Left colon (tissue), 2 donors: ENCODE measurements at regions of chr2 and their contacts with region 1.

Region 1: DNA sequence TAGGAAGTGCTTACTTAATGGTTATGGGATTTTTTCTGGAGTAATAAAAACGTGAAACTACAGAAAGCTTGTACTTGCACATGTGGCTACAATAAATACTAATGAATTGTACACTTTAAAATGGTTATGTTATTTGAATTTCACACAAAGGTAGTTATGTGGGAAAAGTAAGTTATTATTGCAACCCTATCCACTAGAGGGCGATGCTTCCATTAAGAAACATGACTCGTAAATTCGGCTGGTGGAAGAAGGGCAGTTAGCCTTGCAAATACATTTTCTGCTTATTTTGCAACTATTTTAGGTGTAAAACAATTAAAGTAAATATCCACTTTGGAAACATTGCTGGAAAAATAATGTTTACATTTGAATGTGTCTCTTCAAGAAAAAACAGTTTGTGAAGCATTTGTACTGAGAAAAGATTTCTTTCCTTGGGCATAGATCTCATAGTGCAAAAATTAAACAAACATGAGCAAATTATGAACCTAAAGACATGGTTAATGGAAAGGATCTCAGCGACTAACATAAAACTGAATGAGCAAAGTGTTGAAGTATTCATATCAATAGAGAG is 68.1 kb upstream of the CSRNP3 start:
- DNase-seq: no peak
- ATAC-seq: peak; percentile 55

Region 2: GRCh38 chr2:165587335-165587938 is 186.1 kb after region 1 on chr2:
- intact Hi-C with region 1: no loop called
- DNase-seq: no peak
- ATAC-seq: peak; percentile 96

Region 3: DNA sequence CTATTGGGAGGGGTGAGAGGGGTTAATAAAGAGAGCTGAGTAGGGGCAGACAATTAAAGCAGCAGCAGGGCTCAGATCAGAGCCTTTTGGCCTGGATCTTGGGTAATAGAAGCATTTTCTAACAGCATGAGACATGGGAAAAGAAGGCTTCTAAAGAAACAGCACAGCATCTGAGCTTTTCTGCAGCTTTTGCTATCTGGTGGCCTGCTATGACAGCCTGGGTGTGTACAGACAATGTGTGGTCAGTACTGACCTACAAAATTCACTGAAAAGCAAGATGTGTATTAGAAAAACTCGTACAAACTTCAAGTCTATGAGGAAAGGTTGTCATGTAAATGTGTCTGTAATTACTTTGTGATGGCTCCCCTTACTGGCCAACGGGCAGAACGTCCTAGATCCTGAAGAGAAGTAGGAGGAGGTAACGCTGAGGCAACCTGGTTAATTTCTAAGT is 297.1 kb after region 1 on chr2:
- intact Hi-C with region 1: loop called (anchors 5 to 10 kb)
- DNase-seq: peak in 1 of 2 donors; percentile 25
- ATAC-seq: peak; percentile 86

Region 4: DNA sequence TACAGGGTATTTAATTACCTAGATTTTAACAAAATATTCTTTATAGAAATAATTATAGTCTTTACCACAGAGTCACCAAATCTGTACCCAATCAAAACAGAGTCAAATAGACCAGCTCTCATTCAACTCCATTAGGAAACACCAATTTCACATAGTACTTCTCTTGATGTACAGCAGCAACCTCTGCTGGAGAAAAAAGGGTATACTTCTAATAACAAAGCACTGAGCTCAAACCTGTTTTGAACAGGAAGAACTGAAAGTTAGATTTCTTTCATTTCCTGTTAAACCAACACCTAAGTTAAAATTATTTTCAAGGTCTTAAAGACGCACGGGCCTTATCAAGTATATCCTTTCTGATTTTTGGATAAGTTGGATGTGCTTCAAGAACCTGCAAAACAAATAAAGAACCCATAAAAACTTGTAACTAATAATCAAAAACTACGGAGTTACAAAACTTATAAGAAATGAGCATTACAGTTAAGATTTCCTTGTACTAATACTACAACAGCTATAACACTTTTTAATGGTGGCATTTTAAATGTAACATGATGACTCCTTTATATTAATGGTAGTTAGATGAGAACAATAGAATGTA is 473.2 kb after region 1 on chr2:
- intact Hi-C with region 1: loop called in 1 of 2 experiments (anchors 10 kb)
- DNase-seq: no peak
- ATAC-seq: peak; percentile 82